ENCODE measurements at regions of chr11 and their contacts with region 1.

Region 1: GRCh38 chr11:65366340-65366773 is 11.8 kb downstream of the TIGD3 start:
- DNase-seq: peak; percentile 65
- H3K4me3 ChIP-seq: no peak overlapping the region
- H3K27ac ChIP-seq: no peak overlapping the region
- H3K4me1 ChIP-seq: peaks cover 6% of the 10 kb centered on the region
- H3K27me3 ChIP-seq: no peaks in the 10 kb centered on the region
- CTCF ChIP-seq: peak; percentile 73 to 79

Region 2: DNA sequence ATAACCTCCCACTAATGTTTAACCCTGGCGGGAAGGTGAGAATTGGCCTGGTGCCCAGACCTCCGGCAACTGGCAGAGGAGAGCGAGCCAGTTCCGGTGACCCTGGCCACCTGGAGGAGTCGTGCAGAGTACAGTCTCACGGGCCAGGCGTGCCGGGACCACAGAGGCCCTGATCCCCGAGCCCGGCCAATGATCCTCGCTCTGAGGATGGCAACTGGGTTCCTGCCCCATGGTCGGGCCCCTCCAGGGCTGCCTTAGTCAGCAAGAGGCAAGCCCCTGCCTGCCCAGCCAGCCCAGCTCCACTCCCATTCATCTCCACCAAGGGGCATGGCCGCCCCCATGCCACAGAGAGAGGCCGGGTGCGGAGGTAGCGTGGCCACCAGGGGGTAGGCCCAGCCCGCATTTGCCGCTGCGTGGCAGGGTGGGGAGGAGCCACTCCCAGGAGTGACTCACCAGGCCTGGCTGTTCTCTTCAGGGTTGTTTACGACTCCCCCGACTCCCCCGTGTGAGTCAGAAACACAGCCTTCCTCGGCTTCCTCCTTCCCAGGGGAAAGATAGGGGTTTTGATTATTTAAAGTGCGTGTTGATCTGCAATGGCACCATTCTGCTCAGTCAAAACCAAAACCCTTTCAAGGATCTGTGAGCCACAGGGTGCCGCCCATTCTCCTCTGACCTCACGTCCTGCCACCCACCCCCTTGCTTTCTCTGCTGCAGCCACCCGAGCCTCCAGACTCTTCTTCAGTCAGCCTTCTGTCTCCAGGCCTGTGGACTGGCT is 15.9 kb after region 1 on chr11 and contains the start of gene SLC25A45:
- CTCF ChIA-PET with region 1: no interaction called
- dilution Hi-C with region 1: no loop called
- in situ Hi-C with region 1: no loop called
- intact Hi-C with region 1: loop called (anchors 1 kb)
- DNase-seq: peak; percentile 100
- H3K4me3 ChIP-seq: peak within 1 kb of the TSS; percentile 17 to 31 (median 22)
- H3K27ac ChIP-seq: peak within 1 kb of the TSS; percentile 94
- H3K4me1 ChIP-seq: peaks cover 47% of the 10 kb centered on the region
- H3K27me3 ChIP-seq: no peaks in the 10 kb centered on the region
- CTCF ChIP-seq: peak; percentile 55 to 87
- total RNA-seq, gene SLC25A45: 0.50 to 2.4 TPM

Region 3: GRCh38 chr11:65454696-65455456 is 88.5 kb after region 1 on chr11:
- CTCF ChIA-PET with region 1: no interaction called
- dilution Hi-C with region 1: no loop called
- in situ Hi-C with region 1: loop called in 1 of 2 experiments (anchors 10 kb)
- intact Hi-C with region 1: no loop called
- DNase-seq: peak; percentile 68
- H3K4me3 ChIP-seq: peak overlapping the region; percentile 20 to 51 (median 47)
- H3K27ac ChIP-seq: peak overlapping the region; percentile 52
- H3K4me1 ChIP-seq: peaks cover 24% of the 10 kb centered on the region
- H3K27me3 ChIP-seq: no peaks in the 10 kb centered on the region
- CTCF ChIP-seq: no peak

Region 4: GRCh38 chr11:65471410-65471762 is 105.0 kb after region 1 on chr11:
- CTCF ChIA-PET with region 1: no interaction called
- dilution Hi-C with region 1: no loop called
- in situ Hi-C with region 1: loop called in 1 of 2 experiments (anchors 10 kb)
- intact Hi-C with region 1: loop called (anchors 1 kb)
- DNase-seq: no peak
- H3K4me3 ChIP-seq: no peak overlapping the region
- H3K27ac ChIP-seq: peak overlapping the region; percentile 95
- H3K4me1 ChIP-seq: peaks cover 20% of the 10 kb centered on the region
- H3K27me3 ChIP-seq: no peaks in the 10 kb centered on the region
- CTCF ChIP-seq: peak; percentile 55 to 62

Region 5: GRCh38 chr11:65506770-65507505 is 140.6 kb after region 1 on chr11:
- CTCF ChIA-PET with region 1: interaction called, 4 read pairs
- dilution Hi-C with region 1: no loop called
- in situ Hi-C with region 1: loop called in 1 of 2 experiments (anchors 5 kb)
- intact Hi-C with region 1: loop called (anchors 1 kb)
- DNase-seq: no peak
- H3K4me3 ChIP-seq: peak overlapping the region in 1 of 3 experiments; percentile 6
- H3K27ac ChIP-seq: peak overlapping the region; percentile 81
- H3K4me1 ChIP-seq: peaks cover 17% of the 10 kb centered on the region
- H3K27me3 ChIP-seq: no peaks in the 10 kb centered on the region
- CTCF ChIP-seq: no peak

Region 6: GRCh38 chr11:65512306-65512705 is 145.9 kb after region 1 on chr11:
- CTCF ChIA-PET with region 1: interaction called, 4 read pairs
- dilution Hi-C with region 1: no loop called
- in situ Hi-C with region 1: loop called in 1 of 2 experiments (anchors 5 kb)
- intact Hi-C with region 1: loop called (anchors 1 kb)
- DNase-seq: no peak
- H3K4me3 ChIP-seq: no peak overlapping the region
- H3K27ac ChIP-seq: no peak overlapping the region
- H3K4me1 ChIP-seq: no peaks in the 10 kb centered on the region
- H3K27me3 ChIP-seq: no peaks in the 10 kb centered on the region
- CTCF ChIP-seq: no peak